Left ventricle myocardium inferior (tissue), 1 donor: ENCODE measurements at regions of chr3 and their contacts with region 1.

Region 1: DNA sequence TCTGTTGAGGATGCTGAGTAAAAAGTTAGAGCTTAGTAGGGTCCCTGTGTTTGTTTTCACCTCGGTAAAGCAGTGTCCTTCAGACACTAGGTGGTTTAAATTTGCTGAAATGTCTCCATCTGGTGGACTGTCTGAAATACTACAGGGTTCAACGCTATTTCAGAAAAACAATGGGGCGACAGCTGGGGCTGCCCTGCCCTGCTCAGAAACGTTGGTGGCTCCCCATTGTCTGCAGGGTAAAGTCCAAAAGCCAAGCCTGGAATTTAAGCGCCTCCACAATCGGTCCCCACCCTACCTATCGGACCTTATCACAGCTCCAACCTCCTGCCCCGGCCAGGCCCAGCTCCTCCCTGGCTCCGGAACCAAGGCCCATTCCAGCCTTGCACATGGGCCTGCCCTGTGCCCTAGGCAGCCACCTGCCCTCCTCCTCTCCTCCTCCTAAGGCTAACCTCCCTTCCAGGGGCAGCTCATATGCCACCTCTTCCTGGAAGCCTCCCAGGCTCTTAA is 4.3 kb upstream of the TSEN2 start:
- DNase-seq: peak; percentile 28
- H3K4me3 ChIP-seq: no peak overlapping the region
- H3K27ac ChIP-seq: peak overlapping the region; percentile 18
- H3K4me1 ChIP-seq: peaks cover 36% of the 10 kb centered on the region
- H3K27me3 ChIP-seq: no peaks in the 10 kb centered on the region
- CTCF ChIP-seq: peak; percentile 81

Region 2: GRCh38 chr3:12294885-12295580 is 184.9 kb before region 1 on chr3:
- intact Hi-C with region 1: loop called (anchors 10 kb)
- DNase-seq: no peak
- H3K4me3 ChIP-seq: no peak overlapping the region
- H3K27ac ChIP-seq: no peak overlapping the region
- H3K4me1 ChIP-seq: peaks cover 32% of the 10 kb centered on the region
- H3K27me3 ChIP-seq: no peaks in the 10 kb centered on the region
- CTCF ChIP-seq: no peak